Natural killer cell (primary cell): ENCODE measurements at regions of chr6 and their contacts with region 1.

Region 1: DNA sequence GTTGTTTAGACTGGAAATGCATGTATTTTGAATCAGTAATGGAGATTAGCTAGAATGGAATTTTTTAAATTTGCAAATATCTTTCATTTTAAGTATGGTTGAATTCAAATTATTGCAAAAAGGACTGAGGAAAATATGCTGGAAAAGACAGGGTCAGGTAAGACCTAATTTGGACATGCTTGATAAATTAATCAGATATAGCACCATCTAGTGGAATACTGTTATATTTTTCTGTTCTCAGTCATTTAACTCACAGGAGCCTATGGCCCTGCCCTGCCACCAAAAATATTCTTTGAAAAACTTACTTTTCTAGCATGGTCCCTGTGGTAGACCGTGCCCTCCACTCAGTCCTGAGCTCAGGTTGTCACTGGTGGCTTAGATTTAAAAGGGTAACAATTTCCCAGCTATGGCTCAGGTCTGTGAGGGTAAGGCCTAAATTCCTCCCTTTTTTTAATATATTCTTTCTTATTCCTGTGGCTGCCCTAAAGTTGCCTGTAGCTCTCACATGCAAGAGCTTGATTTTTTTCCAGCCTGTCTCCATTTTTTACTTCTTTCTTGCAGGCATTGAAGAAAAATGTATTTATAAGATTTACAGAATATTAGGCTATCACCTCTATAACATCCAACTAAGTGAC is 25.3 kb upstream of the KIAA1586 start:
- DNase-seq: peak in 1 of 2 donors; percentile 35
- ATAC-seq: peak; percentile 55 to 67 (median 60)
- H3K4me3 ChIP-seq: no peak overlapping the region
- H3K4me3 Mint-ChIP-seq: no peak overlapping the region
- H3K27ac ChIP-seq: no peak overlapping the region
- H3K27ac Mint-ChIP-seq: no peak overlapping the region
- H3K4me1 ChIP-seq: no peaks in the 10 kb centered on the region
- H3K4me1 Mint-ChIP-seq: no peaks in the 10 kb centered on the region
- H3K27me3 ChIP-seq: no peaks in the 10 kb centered on the region
- H3K27me3 Mint-ChIP-seq: peaks cover 7 to 17% of the 10 kb centered on the region in 2 donors
- CTCF ChIP-seq: peak; percentile 64

Region 2: DNA sequence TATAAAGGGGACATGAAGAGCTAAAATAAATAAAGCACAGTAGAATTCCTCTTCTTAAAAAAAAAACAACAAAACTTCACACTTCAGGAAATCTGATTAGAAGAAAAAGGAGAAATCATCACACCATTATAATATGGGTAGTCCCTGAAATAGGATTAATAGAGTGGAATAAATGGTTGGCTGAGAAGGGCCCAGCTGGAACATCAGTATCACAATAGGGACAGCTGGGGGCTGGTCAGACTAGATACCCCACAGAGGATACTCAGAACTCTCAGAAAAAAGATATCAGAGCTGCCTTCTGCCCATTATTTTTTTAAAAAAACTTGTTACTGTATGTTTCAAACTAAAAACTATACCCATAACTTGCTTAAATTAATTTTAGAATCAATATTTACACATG is 453.7 kb before region 1 on chr6:
- intact Hi-C with region 1: no loop called
- DNase-seq: no peak
- ATAC-seq: no peak
- H3K4me3 ChIP-seq: no peak overlapping the region
- H3K4me3 Mint-ChIP-seq: no peak overlapping the region
- H3K27ac ChIP-seq: no peak overlapping the region
- H3K27ac Mint-ChIP-seq: no peak overlapping the region
- H3K4me1 ChIP-seq: no peaks in the 10 kb centered on the region
- H3K4me1 Mint-ChIP-seq: no peaks in the 10 kb centered on the region
- H3K27me3 ChIP-seq: no peaks in the 10 kb centered on the region
- H3K27me3 Mint-ChIP-seq: no peaks in the 10 kb centered on the region
- CTCF ChIP-seq: no peak

Region 3: DNA sequence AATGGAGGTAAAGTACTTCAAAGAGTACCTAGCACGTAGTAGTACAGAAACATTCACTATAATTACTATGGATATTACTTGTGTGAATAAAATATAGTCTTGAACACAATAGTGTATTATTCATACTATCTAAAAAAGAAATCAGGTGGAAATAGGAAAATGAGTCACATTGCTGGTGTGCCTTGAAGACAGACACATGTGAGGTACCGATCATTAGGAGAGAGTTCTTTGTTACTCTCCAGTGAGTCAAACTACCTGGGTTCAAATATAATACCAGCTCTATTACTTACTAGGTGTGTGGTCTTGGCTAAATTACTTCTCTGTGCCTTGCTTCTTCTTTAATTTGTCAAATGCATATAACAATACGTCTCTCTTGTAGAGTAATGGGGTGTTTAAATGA is 117.1 kb before region 1 on chr6:
- intact Hi-C with region 1: loop called (anchors 1 kb)
- DNase-seq: no peak
- ATAC-seq: no peak
- H3K4me3 ChIP-seq: no peak overlapping the region
- H3K4me3 Mint-ChIP-seq: no peak overlapping the region
- H3K27ac ChIP-seq: no peak overlapping the region
- H3K27ac Mint-ChIP-seq: no peak overlapping the region
- H3K4me1 ChIP-seq: peaks cover 4% of the 10 kb centered on the region
- H3K4me1 Mint-ChIP-seq: no peaks in the 10 kb centered on the region
- H3K27me3 ChIP-seq: no peaks in the 10 kb centered on the region
- H3K27me3 Mint-ChIP-seq: peaks cover 5 to 15% of the 10 kb centered on the region in 2 donors
- CTCF ChIP-seq: no peak

Region 4: DNA sequence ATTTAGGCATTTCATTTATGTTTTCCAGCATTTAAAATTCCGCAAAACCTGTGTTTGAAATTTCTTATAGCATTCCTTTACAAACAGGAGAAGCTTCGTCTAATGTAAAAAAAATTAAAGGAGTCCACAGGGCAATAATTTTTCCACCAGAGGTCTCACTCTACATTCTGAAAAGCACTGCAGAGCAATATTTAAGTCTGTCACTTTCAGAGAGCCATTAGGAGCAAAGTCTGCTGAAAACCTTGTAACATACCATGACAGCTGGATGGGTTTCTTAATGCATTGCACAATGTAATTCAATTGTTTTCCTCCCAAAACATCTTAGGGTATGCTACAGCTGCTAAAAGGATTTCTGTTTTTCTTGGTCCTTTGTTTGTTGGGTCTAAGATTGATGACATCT is 168.9 kb after region 1 on chr6:
- intact Hi-C with region 1: no loop called
- DNase-seq: peak in 1 of 2 donors; percentile 11
- ATAC-seq: no peak
- H3K4me3 ChIP-seq: no peak overlapping the region
- H3K4me3 Mint-ChIP-seq: no peak overlapping the region
- H3K27ac ChIP-seq: no peak overlapping the region
- H3K27ac Mint-ChIP-seq: no peak overlapping the region
- H3K4me1 ChIP-seq: no peaks in the 10 kb centered on the region
- H3K4me1 Mint-ChIP-seq: no peaks in the 10 kb centered on the region
- H3K27me3 ChIP-seq: no peaks in the 10 kb centered on the region
- H3K27me3 Mint-ChIP-seq: no peaks in the 10 kb centered on the region
- CTCF ChIP-seq: no peak